ENCODE measurements at regions of chr11 and their contacts with region 1.

Region 1: GRCh38 chr11:62841361-62842184 is 2.2 kb upstream of the WDR74 start:
- DNase-seq: peak; percentile 68 to 94 (median 88)
- ATAC-seq: peak; percentile 71
- H3K4me3 ChIP-seq: peak overlapping the region; percentile 73
- H3K4me3 Mint-ChIP-seq: no peak overlapping the region
- H3K27ac ChIP-seq: peak overlapping the region; percentile 99
- H3K27ac Mint-ChIP-seq: no peak overlapping the region
- H3K4me1 ChIP-seq: peaks cover 9 to 22% of the 10 kb centered on the region in 2 donors
- H3K4me1 Mint-ChIP-seq: peaks cover 15 to 31% (median 26%) of the 10 kb centered on the region in 7 donors
- H3K27me3 ChIP-seq: no peaks in the 10 kb centered on the region
- H3K27me3 Mint-ChIP-seq: peaks cover 0 to 6% (median 0%) of the 10 kb centered on the region in 5 donors

Region 2: DNA sequence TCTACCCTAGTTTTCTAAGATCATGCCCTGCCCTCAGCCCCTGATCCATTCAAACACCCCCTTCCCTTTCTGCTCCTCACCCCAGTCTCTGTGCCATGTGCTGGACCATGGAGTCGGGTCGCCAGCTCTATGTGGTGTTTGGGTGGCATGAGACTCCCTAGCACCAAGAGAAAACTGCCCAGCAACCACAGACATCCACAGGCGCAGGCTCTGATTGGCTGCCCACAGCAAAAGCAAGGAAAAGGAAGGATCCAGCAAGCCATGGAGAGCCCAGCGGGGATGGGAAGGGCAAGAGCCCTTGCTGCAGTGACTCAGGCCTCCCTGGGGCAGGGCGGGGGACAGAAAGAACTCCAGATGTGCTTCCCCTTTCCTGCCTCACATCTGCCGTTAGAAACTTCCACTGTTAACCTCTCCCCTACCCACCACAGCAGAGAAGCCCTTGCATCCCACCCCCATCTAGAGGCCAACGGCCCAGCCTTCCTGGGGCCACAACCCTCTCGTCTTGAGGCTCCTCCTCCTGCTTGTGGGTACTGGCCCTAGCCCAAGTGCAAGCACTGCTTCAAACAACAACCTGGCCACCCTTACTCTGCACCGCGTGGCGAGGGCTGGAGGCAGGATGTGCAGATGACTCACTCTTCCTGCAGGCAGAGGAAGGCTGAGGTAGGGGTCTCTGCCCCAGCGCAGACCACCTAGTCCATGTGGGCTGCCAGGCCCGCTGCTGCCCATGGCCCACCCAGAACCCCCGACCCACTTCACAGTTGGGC is 285.3 kb before region 1 on chr11:
- CTCF ChIA-PET with region 1: no interaction called
- POLR2A ChIA-PET with region 1: interaction called, 21 read pairs
- intact Hi-C with region 1: loop called (anchors 1 kb)
- DNase-seq: peak; percentile 58 to 82 (median 72)
- ATAC-seq: peak; percentile 48
- H3K4me3 ChIP-seq: peak overlapping the region; percentile 42
- H3K4me3 Mint-ChIP-seq: peak overlapping the region; percentile 65 to 87 (median 78)
- H3K27ac ChIP-seq: peak overlapping the region; percentile 87
- H3K27ac Mint-ChIP-seq: peak overlapping the region; percentile 87 to 100 (median 98)
- H3K4me1 ChIP-seq: peaks cover 69 to 84% of the 10 kb centered on the region in 2 donors
- H3K4me1 Mint-ChIP-seq: peaks cover 62 to 88% (median 81%) of the 10 kb centered on the region in 7 donors
- H3K27me3 ChIP-seq: no peaks in the 10 kb centered on the region
- H3K27me3 Mint-ChIP-seq: peaks cover 0 to 2% (median 0%) of the 10 kb centered on the region in 5 donors

Region 3: GRCh38 chr11:62671575-62672389 is 169.8 kb before region 1 on chr11 and contains the starts of genes LBHD1 and UQCC3:
- CTCF ChIA-PET with region 1: no interaction called
- POLR2A ChIA-PET with region 1: interaction called, 18 read pairs
- intact Hi-C with region 1: no loop called
- DNase-seq: peak; percentile 49 to 80 (median 73)
- ATAC-seq: peak; percentile 85
- H3K4me3 ChIP-seq: peak within 1 kb of the TSS; percentile 62
- H3K4me3 Mint-ChIP-seq: peak within 1 kb of the TSS; percentile 94 to 100 (median 99)
- H3K27ac ChIP-seq: peak within 1 kb of the TSS; percentile 90
- H3K27ac Mint-ChIP-seq: peak within 1 kb of the TSS; percentile 91 to 97 (median 96)
- H3K4me1 ChIP-seq: peaks cover 12 to 25% of the 10 kb centered on the region in 2 donors
- H3K4me1 Mint-ChIP-seq: peaks cover 12 to 62% (median 51%) of the 10 kb centered on the region in 7 donors
- H3K27me3 ChIP-seq: no peaks in the 10 kb centered on the region
- H3K27me3 Mint-ChIP-seq: no peaks in the 10 kb centered on the region
- total RNA-seq, gene LBHD1: 13.8 to 26.4 (median 20.8) TPM
- total RNA-seq, gene UQCC3: 2.2 to 8.2 (median 5.8) TPM

Region 4: GRCh38 chr11:62753736-62754603 is 87.6 kb before region 1 on chr11 and contains the start of gene ZBTB3:
- CTCF ChIA-PET with region 1: no interaction called
- POLR2A ChIA-PET with region 1: interaction called, 80 read pairs
- intact Hi-C with region 1: loop called in 1 of 2 experiments (anchors 1 kb)
- DNase-seq: peak; percentile 89 to 99 (median 98)
- ATAC-seq: peak; percentile 96
- H3K4me3 ChIP-seq: peak within 1 kb of the TSS; percentile 94
- H3K4me3 Mint-ChIP-seq: peak within 1 kb of the TSS; percentile 86 to 100 (median 98)
- H3K27ac ChIP-seq: peak within 1 kb of the TSS; percentile 83
- H3K27ac Mint-ChIP-seq: peak within 1 kb of the TSS; percentile 93 to 99 (median 95)
- H3K4me1 ChIP-seq: peaks cover 15 to 16% of the 10 kb centered on the region in 2 donors
- H3K4me1 Mint-ChIP-seq: peaks cover 9 to 41% (median 29%) of the 10 kb centered on the region in 7 donors
- H3K27me3 ChIP-seq: no peaks in the 10 kb centered on the region
- H3K27me3 Mint-ChIP-seq: no peaks in the 10 kb centered on the region
- total RNA-seq, gene ZBTB3: 6.4 to 24.1 (median 19.0) TPM

Region 5: DNA sequence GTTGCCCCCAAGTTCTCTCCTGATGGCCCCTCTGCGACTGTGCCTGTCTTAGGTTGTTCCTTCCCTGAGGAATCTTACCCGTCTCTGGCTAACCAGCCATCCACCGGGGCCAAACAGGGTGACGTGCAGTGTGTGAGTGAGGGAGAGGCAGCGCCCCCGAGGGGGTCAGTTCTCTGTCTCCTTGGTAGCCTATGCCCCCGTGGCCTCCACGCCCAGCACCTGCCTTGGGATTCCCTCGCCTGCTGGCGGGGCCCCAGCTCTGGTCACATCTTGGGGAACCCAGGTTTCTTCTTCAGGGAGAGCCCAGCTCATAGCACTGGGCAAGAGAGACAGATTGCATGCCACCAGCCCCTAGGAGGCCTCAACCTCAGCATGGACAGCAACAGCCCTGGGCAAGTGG is 42.1 kb before region 1 on chr11:
- CTCF ChIA-PET with region 1: no interaction called
- POLR2A ChIA-PET with region 1: interaction called, 109 read pairs
- intact Hi-C with region 1: no loop called
- DNase-seq: no peak
- ATAC-seq: no peak
- H3K4me3 ChIP-seq: no peak overlapping the region
- H3K4me3 Mint-ChIP-seq: no peak overlapping the region
- H3K27ac ChIP-seq: no peak overlapping the region
- H3K27ac Mint-ChIP-seq: peak overlapping the region in 4 of 9 donors; percentile 14 to 80 (median 46)
- H3K4me1 ChIP-seq: peaks cover 11 to 13% of the 10 kb centered on the region in 2 donors
- H3K4me1 Mint-ChIP-seq: peaks cover 13 to 33% (median 30%) of the 10 kb centered on the region in 7 donors
- H3K27me3 ChIP-seq: no peaks in the 10 kb centered on the region
- H3K27me3 Mint-ChIP-seq: no peaks in the 10 kb centered on the region

Region 6: GRCh38 chr11:62855571-62856332 is 14.2 kb after region 1 on chr11:
- CTCF ChIA-PET with region 1: interaction called, 11 read pairs
- POLR2A ChIA-PET with region 1: interaction called, 379 read pairs
- intact Hi-C with region 1: loop called (anchors 1 kb)
- DNase-seq: peak; percentile 96 to 100 (median 99)
- ATAC-seq: peak; percentile 97
- H3K4me3 ChIP-seq: peak overlapping the region; percentile 97
- H3K4me3 Mint-ChIP-seq: peak overlapping the region; percentile 93 to 100 (median 98)
- H3K27ac ChIP-seq: peak overlapping the region; percentile 85
- H3K27ac Mint-ChIP-seq: peak overlapping the region; percentile 86 to 98 (median 94)
- H3K4me1 ChIP-seq: peaks cover 33 to 39% of the 10 kb centered on the region in 2 donors
- H3K4me1 Mint-ChIP-seq: peaks cover 34 to 77% (median 46%) of the 10 kb centered on the region in 7 donors
- H3K27me3 ChIP-seq: no peaks in the 10 kb centered on the region
- H3K27me3 Mint-ChIP-seq: peaks cover 0 to 6% (median 0%) of the 10 kb centered on the region in 5 donors